PC-3 (cell line): ENCODE measurements at regions of chr3 and their contacts with region 1.

Region 1: GRCh38 chr3:195259475-195260279 is 11.3 kb downstream of the XXYLT1 start:
- DNase-seq: peak; percentile 91
- ATAC-seq: peak; percentile 74
- H3K4me3 ChIP-seq: peak overlapping the region; percentile 92
- H3K27ac ChIP-seq: peak overlapping the region; percentile 73
- H3K4me1 ChIP-seq: peaks cover 16% of the 10 kb centered on the region
- H3K27me3 ChIP-seq: no peaks in the 10 kb centered on the region
- CTCF ChIP-seq: peak; percentile 46; the same call in 1 of the 2 replicates

Region 2: DNA sequence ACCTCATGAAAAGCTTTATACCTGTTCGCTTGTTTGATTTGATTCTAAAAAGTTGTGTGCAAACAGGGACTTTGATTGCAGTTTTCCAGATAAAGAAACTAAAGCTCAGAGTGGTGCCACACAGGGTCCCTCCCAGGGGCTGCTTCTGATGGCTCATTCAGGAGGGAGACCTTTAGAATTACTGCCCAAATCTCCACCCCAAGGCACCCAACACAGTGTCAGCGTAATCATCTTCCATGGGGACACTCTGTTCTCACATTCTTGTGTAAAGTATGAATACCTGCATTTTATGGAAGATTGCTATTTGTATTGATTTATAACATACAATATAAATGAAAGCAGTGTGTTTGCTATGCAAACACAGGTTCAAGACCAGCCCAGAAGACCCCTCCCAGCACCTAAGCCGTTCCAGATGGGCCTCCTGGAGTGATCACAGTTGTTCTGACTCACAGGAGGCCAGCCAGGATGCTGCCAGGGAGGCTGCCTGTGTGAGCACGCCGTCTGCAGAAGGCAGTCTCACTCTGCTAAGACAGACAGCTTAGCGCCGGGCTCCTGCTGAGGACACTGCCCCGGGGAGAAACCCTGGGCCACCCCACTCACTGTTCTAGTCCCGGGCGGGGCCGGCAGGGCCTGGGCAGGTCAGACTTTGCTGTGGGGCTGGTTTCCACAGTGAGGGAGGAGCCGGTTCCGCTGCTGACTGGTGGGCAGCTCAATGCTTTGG is 388.4 kb before region 1 on chr3:
- CTCF ChIA-PET with region 1: no interaction called
- POLR2A ChIA-PET with region 1: no interaction called
- intact Hi-C with region 1: loop called (anchors 5 kb)
- DNase-seq: peak; percentile 89
- ATAC-seq: peak; percentile 69
- H3K4me3 ChIP-seq: peak overlapping the region; percentile 41; the same call in 1 of the 2 replicates
- H3K27ac ChIP-seq: peak overlapping the region; percentile 96
- H3K4me1 ChIP-seq: peaks cover 51% of the 10 kb centered on the region
- H3K27me3 ChIP-seq: no peaks in the 10 kb centered on the region
- CTCF ChIP-seq: no peak; the same call in 1 of the 2 replicates

Region 3: DNA sequence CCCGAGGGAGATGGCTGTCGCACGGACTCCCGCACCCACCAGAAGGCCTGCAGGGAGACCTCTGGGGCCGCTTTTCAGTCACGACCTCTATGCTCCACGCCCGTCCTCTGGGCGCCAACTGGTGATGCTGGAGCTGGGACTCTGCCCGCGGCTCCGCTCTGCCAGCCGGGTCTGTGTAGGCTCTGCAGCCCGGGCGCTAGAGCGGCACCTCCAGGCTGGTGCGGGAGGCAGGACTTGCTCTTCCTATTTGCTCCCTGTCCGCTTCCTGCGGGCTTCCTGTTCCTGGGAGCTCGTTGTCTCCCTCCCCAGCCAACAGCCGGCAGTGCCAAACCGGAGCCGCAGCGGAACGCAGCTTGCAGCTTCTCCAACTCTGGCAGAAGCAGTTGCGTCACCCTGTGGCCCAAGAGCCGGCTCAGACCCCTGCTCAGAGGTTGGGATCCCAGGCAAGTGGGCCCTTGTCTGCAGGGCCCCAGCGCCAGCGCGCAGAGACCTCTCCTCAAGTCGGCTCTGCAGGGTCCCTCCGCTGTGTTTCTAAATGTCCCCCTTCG is 274.6 kb before region 1 on chr3:
- CTCF ChIA-PET with region 1: no interaction called
- POLR2A ChIA-PET with region 1: no interaction called
- intact Hi-C with region 1: loop called (anchors 5 kb)
- DNase-seq: peak; percentile 86
- ATAC-seq: peak; percentile 84
- H3K4me3 ChIP-seq: peak overlapping the region; percentile 51; the same call in 1 of the 2 replicates
- H3K27ac ChIP-seq: peak overlapping the region; percentile 10; the same call in 1 of the 2 replicates
- H3K4me1 ChIP-seq: peaks cover 43% of the 10 kb centered on the region
- H3K27me3 ChIP-seq: no peaks in the 10 kb centered on the region
- CTCF ChIP-seq: peak; percentile 68

Region 4: GRCh38 chr3:195030791-195031321 is 228.8 kb before region 1 on chr3:
- CTCF ChIA-PET with region 1: no interaction called
- POLR2A ChIA-PET with region 1: no interaction called
- intact Hi-C with region 1: loop called (anchors 5 kb)
- DNase-seq: peak; percentile 94
- ATAC-seq: peak; percentile 84
- H3K4me3 ChIP-seq: peak overlapping the region; percentile 25
- H3K27ac ChIP-seq: peak overlapping the region; percentile 89
- H3K4me1 ChIP-seq: peaks cover 44% of the 10 kb centered on the region
- H3K27me3 ChIP-seq: no peaks in the 10 kb centered on the region
- CTCF ChIP-seq: no peak

Region 5: DNA sequence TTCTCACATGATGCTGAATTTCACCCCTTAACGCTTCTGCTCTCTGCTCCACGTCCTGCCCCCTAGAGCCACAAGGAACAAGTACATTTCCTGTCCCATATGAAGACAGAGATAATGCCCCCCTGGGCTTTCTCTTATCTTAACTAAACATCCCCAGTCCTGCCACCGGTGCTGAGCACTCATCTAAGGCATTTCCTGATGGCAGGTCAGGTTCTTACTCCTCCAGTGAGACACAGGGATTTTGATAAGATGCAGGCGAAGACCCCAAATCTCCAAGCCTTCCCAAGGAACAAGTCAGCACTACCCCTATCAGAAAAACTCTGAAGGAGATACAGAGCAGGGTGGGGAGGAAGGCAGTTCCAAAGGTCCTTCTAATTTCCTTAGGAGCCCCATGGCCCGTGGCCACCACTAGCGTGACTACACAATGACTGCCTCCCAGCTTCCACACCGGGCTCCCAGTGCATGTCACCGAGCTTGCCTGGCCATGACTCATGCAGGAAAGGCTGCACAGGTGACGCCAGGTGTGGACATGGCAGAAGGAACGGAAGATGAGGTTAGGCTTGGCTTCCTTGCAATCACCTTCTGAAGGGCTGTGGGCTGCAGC is 141.6 kb before region 1 on chr3:
- CTCF ChIA-PET with region 1: no interaction called
- POLR2A ChIA-PET with region 1: no interaction called
- intact Hi-C with region 1: loop called (anchors 2 kb)
- DNase-seq: peak; percentile 89
- ATAC-seq: peak; percentile 87
- H3K4me3 ChIP-seq: no peak overlapping the region
- H3K27ac ChIP-seq: peak overlapping the region; percentile 81
- H3K4me1 ChIP-seq: peaks cover 26% of the 10 kb centered on the region
- H3K27me3 ChIP-seq: no peaks in the 10 kb centered on the region
- CTCF ChIP-seq: peak; percentile 31; the same call in 1 of the 2 replicates

Region 6: DNA sequence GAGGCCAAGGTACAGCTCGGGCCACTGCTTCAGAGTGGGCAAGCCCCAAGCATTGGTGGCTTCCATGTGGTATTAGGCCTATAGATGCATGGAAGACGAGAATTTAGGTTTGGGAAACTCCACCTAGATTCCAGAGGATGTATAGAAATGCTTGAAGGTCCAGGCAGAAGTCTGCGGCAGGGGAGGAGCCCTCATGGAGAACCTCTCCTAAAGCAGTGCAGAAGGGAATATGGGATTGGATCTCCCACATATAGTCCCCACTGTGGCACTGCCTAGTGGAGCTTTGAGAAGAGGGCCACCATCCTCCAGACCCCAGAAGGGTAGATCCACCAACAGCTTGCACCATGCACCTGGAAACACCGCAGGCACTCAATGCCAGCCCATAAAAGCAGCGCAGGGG is 59.4 kb after region 1 on chr3:
- CTCF ChIA-PET with region 1: no interaction called
- POLR2A ChIA-PET with region 1: no interaction called
- intact Hi-C with region 1: no loop called
- DNase-seq: no peak
- ATAC-seq: no peak
- H3K4me3 ChIP-seq: no peak overlapping the region
- H3K27ac ChIP-seq: no peak overlapping the region
- H3K4me1 ChIP-seq: no peaks in the 10 kb centered on the region
- H3K27me3 ChIP-seq: no peaks in the 10 kb centered on the region
- CTCF ChIP-seq: no peak

Region 7: DNA sequence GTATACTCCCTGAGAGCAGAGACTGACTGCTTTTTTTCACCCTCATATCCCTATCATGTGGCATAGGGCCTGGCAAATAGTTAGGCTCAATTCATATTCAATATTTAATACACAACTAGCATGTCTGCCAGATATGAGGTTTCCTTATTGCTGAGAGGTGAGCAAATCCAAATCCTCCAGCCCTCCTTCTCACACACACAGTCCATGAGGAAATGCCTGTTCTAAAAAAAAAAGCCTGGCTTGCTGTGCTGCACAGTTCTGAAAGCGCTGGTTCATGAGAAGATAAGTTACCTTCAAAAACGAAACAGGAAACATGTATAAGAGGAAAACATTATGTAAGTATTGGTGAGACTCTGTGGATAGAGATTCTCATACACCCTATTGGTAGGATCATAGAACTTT is 198.6 kb after region 1 on chr3:
- CTCF ChIA-PET with region 1: no interaction called
- POLR2A ChIA-PET with region 1: no interaction called
- intact Hi-C with region 1: no loop called
- DNase-seq: no peak
- ATAC-seq: no peak
- H3K4me3 ChIP-seq: no peak overlapping the region
- H3K27ac ChIP-seq: no peak overlapping the region
- H3K4me1 ChIP-seq: 0 out of 2 replicates have a peak, but pooled peaks cover 5% of the 10 kb centered on the region
- H3K27me3 ChIP-seq: no peaks in the 10 kb centered on the region
- CTCF ChIP-seq: no peak

Region 8: DNA sequence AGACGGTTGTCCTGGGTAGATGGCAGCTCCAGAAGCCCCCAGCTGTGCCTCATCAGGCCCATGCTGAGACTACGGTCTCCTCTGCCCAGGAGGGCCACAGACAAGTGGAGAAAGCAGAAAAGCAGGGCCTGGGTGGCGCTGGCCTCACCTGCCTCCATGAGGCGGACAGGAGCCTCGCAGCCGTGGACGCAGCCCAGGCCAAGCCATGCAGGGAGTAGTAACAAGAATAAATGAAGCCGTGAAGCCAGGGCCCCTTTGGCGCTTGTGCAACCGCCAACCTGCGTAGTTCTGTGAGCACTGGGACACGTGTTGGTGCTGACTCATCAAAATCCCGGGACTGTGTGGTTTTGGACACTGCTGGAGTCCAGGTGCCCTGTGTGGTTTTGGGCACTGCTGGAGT is 564.3 kb after region 1 on chr3:
- CTCF ChIA-PET with region 1: no interaction called
- POLR2A ChIA-PET with region 1: no interaction called
- intact Hi-C with region 1: no loop called
- DNase-seq: peak; percentile 69
- ATAC-seq: peak; percentile 54
- H3K4me3 ChIP-seq: no peak overlapping the region
- H3K27ac ChIP-seq: no peak overlapping the region
- H3K4me1 ChIP-seq: 0 out of 2 replicates have a peak, but pooled peaks cover 10% of the 10 kb centered on the region
- H3K27me3 ChIP-seq: no peaks in the 10 kb centered on the region
- CTCF ChIP-seq: no peak